IMR-90 (cell line): ENCODE measurements at regions of chr5 and their contacts with region 1.

Region 1: DNA sequence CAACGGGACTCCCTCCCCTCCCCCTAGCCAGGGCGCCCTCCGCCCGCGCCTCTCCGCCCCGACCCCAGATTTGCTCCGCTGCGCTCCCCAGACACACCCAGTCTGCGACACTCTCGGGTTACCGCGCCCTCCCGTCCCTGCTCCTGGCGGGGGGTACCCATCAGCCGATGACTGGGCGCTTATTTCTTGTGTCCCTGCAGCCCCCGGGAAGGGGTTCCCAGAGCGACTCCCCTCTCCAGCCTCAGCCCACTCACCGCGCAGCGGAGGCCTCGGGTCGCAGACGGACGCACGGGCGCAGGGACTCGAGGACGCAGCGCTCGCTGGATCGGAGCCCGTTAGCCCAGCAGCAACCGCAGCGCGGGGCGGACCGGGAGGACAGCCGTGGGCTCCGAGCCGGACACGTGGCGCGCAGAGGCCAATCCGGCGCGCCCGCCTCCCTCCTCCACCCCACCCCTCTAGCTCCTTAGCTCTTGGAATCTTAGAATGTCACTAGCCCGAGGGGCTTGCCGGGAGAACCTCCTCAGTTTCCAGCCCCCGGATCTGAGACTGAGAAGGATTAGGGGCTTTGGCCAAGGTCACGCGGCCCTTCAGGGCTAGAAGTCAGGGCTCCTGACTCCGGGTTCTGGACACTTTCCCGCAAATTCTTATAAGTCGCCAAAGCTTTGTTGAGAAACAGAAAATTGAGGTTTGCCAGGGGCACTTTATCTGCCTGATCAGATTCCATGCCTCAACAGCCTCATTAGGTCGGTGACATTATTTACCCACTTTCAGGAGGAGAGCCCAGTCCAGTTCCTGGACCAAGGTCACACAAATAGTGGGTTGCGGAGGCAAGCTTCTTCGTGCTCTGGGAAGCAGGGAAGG is at the start of gene ANXA6:
- DNase-seq: peak; percentile 73
- ATAC-seq: peak; percentile 93
- H3K4me3 ChIP-seq: peak within 1 kb of the TSS; percentile 79
- H3K27ac ChIP-seq: peak within 1 kb of the TSS; percentile 95
- H3K4me1 ChIP-seq: peaks cover 14% of the 10 kb centered on the region
- H3K27me3 ChIP-seq: no peaks in the 10 kb centered on the region
- CTCF ChIP-seq: no peak
- POLR2A ChIP-seq: peak; percentile 54
- RAD21 ChIP-seq: no peak
- total RNA-seq, gene ANXA6: 610 and 633 TPM in 2 replicates

Region 2: DNA sequence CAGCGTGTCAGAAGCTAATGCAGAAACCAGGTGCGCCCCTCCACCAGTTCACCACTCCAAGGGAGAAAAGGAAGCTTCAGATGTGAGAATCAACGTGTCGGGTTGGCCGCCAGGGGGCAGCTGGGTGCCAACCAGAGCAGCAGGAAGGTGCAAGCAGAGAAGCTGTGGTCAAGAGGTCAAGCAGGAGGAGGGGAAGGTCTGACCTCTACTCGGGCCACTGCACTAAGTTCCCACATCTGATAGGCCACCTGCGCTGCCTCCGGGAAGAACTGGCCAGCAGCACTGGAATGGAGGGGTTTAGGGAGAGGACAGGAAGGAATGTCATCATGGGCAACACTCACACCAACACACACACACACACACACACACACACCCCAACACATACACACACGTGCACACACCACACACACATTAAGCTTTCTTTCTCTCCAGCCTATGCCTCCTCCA is 31.4 kb before region 1 on chr5:
- CTCF ChIA-PET with region 1: interaction called, 3 read pairs
- POLR2A ChIA-PET with region 1: no interaction called
- dilution Hi-C with region 1: no loop called
- in situ Hi-C with region 1: no loop called
- intact Hi-C with region 1: loop called (anchors 2 kb)
- DNase-seq: peak; percentile 51
- ATAC-seq: peak; percentile 79
- H3K4me3 ChIP-seq: no peak overlapping the region
- H3K27ac ChIP-seq: no peak overlapping the region
- H3K4me1 ChIP-seq: peaks cover 2% of the 10 kb centered on the region; the same call in 1 of the 2 replicates
- H3K27me3 ChIP-seq: no peaks in the 10 kb centered on the region
- CTCF ChIP-seq: peak; percentile 63
- POLR2A ChIP-seq: no peak
- RAD21 ChIP-seq: peak; percentile 63

Region 3: GRCh38 chr5:151174612-151175101 is 17.0 kb after region 1 on chr5:
- CTCF ChIA-PET with region 1: no interaction called
- POLR2A ChIA-PET with region 1: no interaction called
- dilution Hi-C with region 1: no loop called
- in situ Hi-C with region 1: no loop called
- intact Hi-C with region 1: no loop called
- DNase-seq: no peak
- ATAC-seq: peak; percentile 82
- H3K4me3 ChIP-seq: peak overlapping the region; percentile 23; the same call in 1 of the 2 replicates
- H3K27ac ChIP-seq: no peak overlapping the region
- H3K4me1 ChIP-seq: no peaks in the 10 kb centered on the region
- H3K27me3 ChIP-seq: peaks cover 21% of the 10 kb centered on the region
- CTCF ChIP-seq: no peak
- POLR2A ChIP-seq: no peak
- RAD21 ChIP-seq: no peak